ENCODE measurements at regions of chr17 and their contacts with region 1.

Region 1: GRCh38 chr17:81666342-81667191 is at the starts of genes CCDC137 and OXLD1:
- DNase-seq: peak; percentile 91
- H3K4me3 Mint-ChIP-seq: peak within 1 kb of the TSS; percentile 94
- H3K27ac Mint-ChIP-seq: peak within 1 kb of the TSS; percentile 95
- H3K4me1 Mint-ChIP-seq: peaks cover 29% of the 10 kb centered on the region
- H3K27me3 Mint-ChIP-seq: no peaks in the 10 kb centered on the region
- total RNA-seq, gene CCDC137: 50.8 and 51.7 TPM in 2 replicates
- total RNA-seq, gene OXLD1: 51.3 and 52.7 TPM in 2 replicates

Region 2: GRCh38 chr17:81612172-81612970 is 54.2 kb before region 1 on chr17:
- intact Hi-C with region 1: no loop called
- DNase-seq: no peak
- H3K4me3 Mint-ChIP-seq: no peak overlapping the region
- H3K27ac Mint-ChIP-seq: no peak overlapping the region
- H3K4me1 Mint-ChIP-seq: peaks cover 33% of the 10 kb centered on the region
- H3K27me3 Mint-ChIP-seq: no peaks in the 10 kb centered on the region

Region 3: GRCh38 chr17:81636505-81637288 is 29.9 kb before region 1 on chr17 and contains the starts of genes NPLOC4 and TSPAN10:
- intact Hi-C with region 1: loop called (anchors 2 kb)
- DNase-seq: peak; percentile 80
- H3K4me3 Mint-ChIP-seq: peak within 1 kb of the TSS; percentile 94
- H3K27ac Mint-ChIP-seq: peak within 1 kb of the TSS; percentile 75
- H3K4me1 Mint-ChIP-seq: peaks cover 13% of the 10 kb centered on the region
- H3K27me3 Mint-ChIP-seq: no peaks in the 10 kb centered on the region
- total RNA-seq, gene NPLOC4: 128 and 138 TPM in 2 replicates
- total RNA-seq, gene TSPAN10: 0.30 and 0.44 TPM in 2 replicates

Region 4: GRCh38 chr17:81702971-81703746 is 36.6 kb after region 1 on chr17 and contains the start of gene MRPL12:
- intact Hi-C with region 1: loop called (anchors 5 kb)
- DNase-seq: peak; percentile 85
- H3K4me3 Mint-ChIP-seq: peak within 1 kb of the TSS; percentile 98
- H3K27ac Mint-ChIP-seq: peak within 1 kb of the TSS; percentile 96
- H3K4me1 Mint-ChIP-seq: peaks cover 13% of the 10 kb centered on the region
- H3K27me3 Mint-ChIP-seq: no peaks in the 10 kb centered on the region
- total RNA-seq, gene MRPL12: 175 and 179 TPM in 2 replicates